ENCODE measurements at regions of chr12 and their contacts with region 1.

Region 1: DNA sequence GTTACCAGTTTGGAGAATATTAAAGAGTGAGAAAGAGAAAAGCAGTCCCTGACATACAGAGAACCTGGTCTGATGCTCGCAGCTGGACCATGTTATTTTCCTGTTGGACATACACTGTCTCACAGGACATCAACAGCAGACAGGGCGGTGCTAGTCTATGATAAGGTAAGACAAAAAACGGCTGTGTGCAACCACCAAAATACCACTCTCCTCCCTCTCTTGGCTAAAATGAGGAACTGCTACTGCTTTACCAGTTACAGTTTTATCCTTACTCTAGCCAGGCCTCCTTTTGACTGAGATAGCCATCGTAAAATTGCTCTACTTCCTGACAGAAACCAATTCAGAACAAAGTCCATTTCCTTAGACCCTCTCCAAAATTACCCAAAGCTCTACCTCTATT is 47.0 kb upstream of the ERGIC2 start:
- DNase-seq: no peak
- ATAC-seq: peak; percentile 57
- H3K4me3 Mint-ChIP-seq: no peak overlapping the region
- H3K27ac Mint-ChIP-seq: no peak overlapping the region
- H3K4me1 Mint-ChIP-seq: peaks cover 5% of the 10 kb centered on the region
- H3K27me3 Mint-ChIP-seq: peaks cover 9% of the 10 kb centered on the region
- CTCF ChIP-seq: no peak

Region 2: DNA sequence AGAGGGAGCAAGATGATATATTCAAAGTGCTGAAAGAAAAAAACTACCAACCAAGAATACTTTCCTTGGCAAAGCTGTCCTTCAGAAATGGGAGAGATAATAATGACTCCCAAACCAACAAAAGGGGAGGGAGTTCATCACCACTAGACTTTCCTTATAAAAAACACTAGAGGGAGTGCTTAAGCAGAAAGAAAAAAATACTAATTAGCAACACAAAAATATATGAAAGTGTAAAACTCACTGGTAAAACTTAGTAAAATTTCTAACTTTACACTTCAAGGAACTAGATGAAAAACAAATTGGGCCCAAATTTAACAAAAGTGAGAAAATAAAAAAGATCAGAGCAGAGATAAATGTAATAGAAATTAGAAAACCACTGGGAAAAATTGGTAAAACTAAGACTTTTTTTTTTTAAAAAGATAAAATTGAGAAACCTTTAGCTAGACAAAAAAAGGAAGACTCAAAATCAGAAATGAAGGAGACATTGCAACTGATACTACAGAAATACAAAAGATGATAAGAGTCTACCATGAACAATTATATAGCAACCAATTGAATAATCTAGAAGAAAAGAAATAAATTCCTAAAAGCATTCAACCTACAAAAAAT is 339.2 kb before region 1 on chr12:
- CTCF ChIA-PET with region 1: no interaction called
- POLR2A ChIA-PET with region 1: no interaction called
- intact Hi-C with region 1: loop called (anchors 10 kb)
- DNase-seq: no peak
- ATAC-seq: no peak
- H3K4me3 Mint-ChIP-seq: no peak overlapping the region
- H3K27ac Mint-ChIP-seq: no peak overlapping the region
- H3K4me1 Mint-ChIP-seq: no peaks in the 10 kb centered on the region
- H3K27me3 Mint-ChIP-seq: peaks cover 4% of the 10 kb centered on the region
- CTCF ChIP-seq: no peak

Region 3: GRCh38 chr12:29176941-29177340 is 251.0 kb before region 1 on chr12:
- CTCF ChIA-PET with region 1: no interaction called
- POLR2A ChIA-PET with region 1: no interaction called
- intact Hi-C with region 1: no loop called
- DNase-seq: no peak
- ATAC-seq: no peak
- H3K4me3 Mint-ChIP-seq: no peak overlapping the region
- H3K27ac Mint-ChIP-seq: no peak overlapping the region
- H3K4me1 Mint-ChIP-seq: no peaks in the 10 kb centered on the region
- H3K27me3 Mint-ChIP-seq: no peaks in the 10 kb centered on the region
- CTCF ChIP-seq: no peak

Region 4: GRCh38 chr12:29309320-29309902 is 118.6 kb before region 1 on chr12:
- CTCF ChIA-PET with region 1: no interaction called
- POLR2A ChIA-PET with region 1: no interaction called
- intact Hi-C with region 1: loop called (anchors 1 kb)
- DNase-seq: no peak
- ATAC-seq: no peak
- H3K4me3 Mint-ChIP-seq: no peak overlapping the region
- H3K27ac Mint-ChIP-seq: no peak overlapping the region
- H3K4me1 Mint-ChIP-seq: no peaks in the 10 kb centered on the region
- H3K27me3 Mint-ChIP-seq: no peaks in the 10 kb centered on the region
- CTCF ChIP-seq: no peak

Region 5: GRCh38 chr12:29354954-29355353 is 73.0 kb before region 1 on chr12:
- CTCF ChIA-PET with region 1: no interaction called
- POLR2A ChIA-PET with region 1: no interaction called
- intact Hi-C with region 1: loop called (anchors 2 kb)
- DNase-seq: no peak
- ATAC-seq: no peak
- H3K4me3 Mint-ChIP-seq: no peak overlapping the region
- H3K27ac Mint-ChIP-seq: no peak overlapping the region
- H3K4me1 Mint-ChIP-seq: no peaks in the 10 kb centered on the region
- H3K27me3 Mint-ChIP-seq: no peaks in the 10 kb centered on the region
- CTCF ChIP-seq: no peak

Measured in activated B cell treated with CpG ODN at 0.5 μM for 24 hours (primary cell).